GM18951 (cell line): ENCODE measurements at regions of chr5 and their contacts with region 1.

Region 1: GRCh38 chr5:53469946-53470687 is 10.3 kb upstream of the FST start:
- POLR2A ChIP-seq: no peak

Region 2: DNA sequence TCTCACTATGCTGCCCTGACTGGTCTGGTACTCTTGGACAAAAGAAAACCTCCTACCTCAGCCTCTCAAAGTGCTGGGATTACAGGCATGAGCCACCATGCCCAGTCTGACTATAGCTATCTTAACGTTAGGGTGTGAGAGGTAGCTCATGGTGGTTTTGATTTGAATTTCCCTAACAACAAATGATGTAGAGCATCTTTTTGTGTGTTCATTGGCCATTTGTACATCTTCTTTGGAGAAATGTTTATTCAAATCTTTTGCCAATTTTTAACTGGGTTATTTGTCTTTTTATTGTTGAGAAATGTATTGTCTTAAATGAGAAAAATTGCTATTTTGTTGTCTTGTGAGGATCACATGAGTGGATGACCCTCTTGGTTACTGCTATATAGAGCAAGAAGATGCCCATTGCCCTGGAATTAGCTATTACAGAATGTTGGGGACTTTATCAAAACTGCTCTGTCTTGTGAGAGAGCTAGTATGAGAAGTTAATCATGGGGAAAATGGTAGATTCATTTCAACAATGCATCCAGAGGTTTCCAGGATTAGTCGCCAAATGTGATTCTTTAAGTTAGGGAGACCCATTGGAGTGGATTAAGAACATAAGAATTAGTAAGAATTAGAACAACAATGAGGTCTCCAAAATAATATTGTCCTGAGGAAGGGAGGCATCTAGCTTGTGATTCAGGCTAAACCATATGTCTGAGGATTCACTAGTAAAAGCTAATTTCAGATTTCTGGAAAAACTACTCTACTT is 236.3 kb before region 1 on chr5:
- in situ Hi-C with region 1: no loop called
- POLR2A ChIP-seq: no peak

Region 3: DNA sequence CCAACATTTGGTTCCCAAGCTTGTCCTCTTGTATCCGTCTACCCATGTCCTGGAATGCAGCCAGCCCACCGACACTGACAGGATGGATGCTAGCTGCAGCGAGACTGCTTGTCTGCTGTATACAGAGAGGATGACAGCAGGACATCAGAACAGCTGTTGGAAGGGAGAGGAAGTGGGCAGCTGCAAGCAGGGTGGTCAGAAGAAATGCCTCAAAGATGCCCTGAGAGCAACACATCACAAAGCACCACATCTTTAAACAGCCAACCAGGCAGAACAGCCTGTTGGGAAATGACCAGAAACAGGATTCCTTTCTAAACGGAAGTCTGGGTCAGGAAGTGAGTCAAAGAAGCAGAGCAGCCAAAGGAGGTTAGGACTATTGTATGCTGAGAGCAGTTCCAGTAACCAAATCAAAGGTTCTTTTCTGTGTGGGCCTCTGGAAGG is 309.4 kb after region 1 on chr5:
- in situ Hi-C with region 1: no loop called
- POLR2A ChIP-seq: no peak

Region 4: GRCh38 chr5:54229041-54229780 is 759.1 kb after region 1 on chr5:
- in situ Hi-C with region 1: loop called (anchors 25 kb)
- POLR2A ChIP-seq: no peak